CD14-positive monocyte (primary cell): ENCODE measurements at regions of chr7 and their contacts with region 1.

Region 1: GRCh38 chr7:77269360-77270093 is 69.9 kb upstream of the FGL2 start:
- DNase-seq: peak in 2 of 3 donors; percentile 30 to 38
- H3K4me3 ChIP-seq: no peak overlapping the region
- H3K4me3 Mint-ChIP-seq: no peak overlapping the region
- H3K27ac ChIP-seq: no peak overlapping the region
- H3K27ac Mint-ChIP-seq: peak overlapping the region in 3 of 7 donors; percentile 7 to 47 (median 15)
- H3K4me1 ChIP-seq: peaks cover 8 to 12% of the 10 kb centered on the region in 2 donors
- H3K4me1 Mint-ChIP-seq: peaks cover 10% of the 10 kb centered on the region
- H3K27me3 ChIP-seq: no peaks in the 10 kb centered on the region
- H3K27me3 Mint-ChIP-seq: no peaks in the 10 kb centered on the region
- CTCF ChIP-seq: no peak

Region 2: GRCh38 chr7:77315182-77315591 is 45.7 kb after region 1 on chr7:
- intact Hi-C with region 1: loop called (anchors 10 kb)
- DNase-seq: no peak
- H3K4me3 ChIP-seq: no peak overlapping the region
- H3K4me3 Mint-ChIP-seq: no peak overlapping the region
- H3K27ac ChIP-seq: no peak overlapping the region
- H3K27ac Mint-ChIP-seq: no peak overlapping the region
- H3K4me1 ChIP-seq: peaks cover 13 to 20% of the 10 kb centered on the region in 2 donors
- H3K4me1 Mint-ChIP-seq: peaks cover 14% of the 10 kb centered on the region
- H3K27me3 ChIP-seq: no peaks in the 10 kb centered on the region
- H3K27me3 Mint-ChIP-seq: peaks cover 0 to 2% (median 0%) of the 10 kb centered on the region in 3 donors
- CTCF ChIP-seq: no peak

Region 3: GRCh38 chr7:77326696-77327628 is 57.4 kb after region 1 on chr7:
- intact Hi-C with region 1: loop called in 1 of 2 experiments (anchors 10 kb)
- DNase-seq: peak; percentile 77 to 98 (median 86)
- H3K4me3 ChIP-seq: peak overlapping the region in 1 of 3 experiments; percentile 3
- H3K4me3 Mint-ChIP-seq: peak overlapping the region in 1 of 2 donors; percentile 46
- H3K27ac ChIP-seq: peak overlapping the region; percentile 38 to 42
- H3K27ac Mint-ChIP-seq: peak overlapping the region; percentile 54 to 92 (median 82)
- H3K4me1 ChIP-seq: peaks cover 50 to 56% of the 10 kb centered on the region in 2 donors
- H3K4me1 Mint-ChIP-seq: peaks cover 59% of the 10 kb centered on the region
- H3K27me3 ChIP-seq: no peaks in the 10 kb centered on the region
- H3K27me3 Mint-ChIP-seq: peaks cover 0 to 2% (median 0%) of the 10 kb centered on the region in 3 donors
- CTCF ChIP-seq: no peak